Heart right ventricle (tissue), 16 donors: ENCODE measurements at regions of chr4 and their contacts with region 1.

Region 1: GRCh38 chr4:119628308-119629141 is at the start of gene PDE5A:
- DNase-seq: peak; percentile 72 to 84
- ATAC-seq: peak; percentile 80 to 95 (median 88)
- H3K4me3 ChIP-seq: peak within 1 kb of the TSS; percentile 80 to 91 (median 82)
- H3K27ac ChIP-seq: peak within 1 kb of the TSS; percentile 78 to 92 (median 88)
- H3K4me1 ChIP-seq: peaks cover 0 to 25% (median 7%) of the 10 kb centered on the region in 9 donors
- H3K27me3 ChIP-seq: peaks cover 0 to 62% (median 3%) of the 10 kb centered on the region in 7 donors
- CTCF ChIP-seq: peak; percentile 59 to 93 (median 83)
- total RNA-seq, gene PDE5A: 5.8 to 17.4 (median 11.9) TPM

Region 2: DNA sequence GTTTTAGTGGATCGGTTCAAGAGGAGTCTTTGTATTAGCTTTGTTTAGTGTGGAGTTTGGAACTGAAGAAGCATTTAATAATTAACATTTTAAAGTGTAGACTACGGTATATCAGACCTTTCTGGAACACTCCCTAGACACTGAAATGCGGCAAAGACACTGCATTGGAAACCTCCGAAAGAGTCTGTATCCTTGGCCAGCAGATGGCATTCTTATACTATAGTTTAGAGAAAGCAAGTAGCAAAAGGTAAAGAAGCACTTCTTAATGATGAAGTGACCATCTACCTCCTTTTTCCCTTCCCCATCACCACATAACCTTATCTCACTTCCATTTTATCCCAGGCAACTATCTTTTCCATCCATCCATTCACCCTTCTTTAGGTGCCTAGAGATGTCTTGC is 314.2 kb before region 1 on chr4:
- intact Hi-C with region 1: loop called in 3 of 10 experiments (anchors 5 to 10 kb)
- DNase-seq: peak in 1 of 2 donors; percentile 29
- ATAC-seq: peak in 7 of 8 donors; percentile 62 to 80 (median 76)
- H3K4me3 ChIP-seq: no peak overlapping the region
- H3K27ac ChIP-seq: no peak overlapping the region
- H3K4me1 ChIP-seq: peaks cover 0 to 5% (median 0%) of the 10 kb centered on the region in 9 donors
- H3K27me3 ChIP-seq: no peaks in the 10 kb centered on the region
- CTCF ChIP-seq: peak in 8 of 9 donors; percentile 34 to 78 (median 63)

Region 3: GRCh38 chr4:119517361-119518226 is 110.9 kb before region 1 on chr4:
- intact Hi-C with region 1: no loop called
- DNase-seq: peak in 1 of 2 donors; percentile 26
- ATAC-seq: peak; percentile 57 to 87 (median 82)
- H3K4me3 ChIP-seq: no peak overlapping the region
- H3K27ac ChIP-seq: peak overlapping the region in 9 of 10 donors; percentile 7 to 73 (median 51)
- H3K4me1 ChIP-seq: peaks cover 0 to 37% (median 12%) of the 10 kb centered on the region in 9 donors
- H3K27me3 ChIP-seq: no peaks in the 10 kb centered on the region
- CTCF ChIP-seq: no peak

Region 4: DNA sequence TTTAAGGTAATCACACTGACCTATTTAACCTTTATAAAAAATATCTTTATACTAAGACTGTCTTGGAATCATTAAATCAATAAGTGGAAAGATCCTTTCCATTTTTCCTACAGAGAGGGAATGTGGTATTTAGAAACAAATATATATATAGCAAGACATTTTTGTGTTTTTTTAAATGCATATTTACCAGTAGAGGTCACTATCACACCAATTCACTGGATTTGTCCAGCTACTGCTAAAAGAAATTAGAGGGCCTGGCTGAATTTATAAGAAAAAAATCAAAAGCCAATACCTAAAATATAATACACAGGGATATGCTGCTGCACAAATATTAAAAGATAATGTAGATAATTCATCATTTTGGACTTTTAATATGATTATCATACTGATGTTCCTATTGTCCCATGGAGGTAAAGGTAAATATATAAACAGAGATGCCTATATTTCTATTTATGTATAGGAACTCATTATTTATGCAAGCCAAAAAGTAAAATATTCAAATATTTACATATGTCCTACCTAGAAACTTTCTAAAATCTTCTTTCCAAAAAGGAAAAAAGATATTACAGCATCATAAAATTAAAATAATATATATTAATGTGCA is 69.4 kb before region 1 on chr4:
- intact Hi-C with region 1: loop called in 8 of 10 experiments (anchors 2 to 10 kb)
- DNase-seq: no peak
- ATAC-seq: no peak
- H3K4me3 ChIP-seq: no peak overlapping the region
- H3K27ac ChIP-seq: no peak overlapping the region
- H3K4me1 ChIP-seq: no peaks in the 10 kb centered on the region
- H3K27me3 ChIP-seq: no peaks in the 10 kb centered on the region
- CTCF ChIP-seq: peak; percentile 18 to 69 (median 53)

Region 5: GRCh38 chr4:119692001-119692400 is 63.5 kb after region 1 on chr4:
- intact Hi-C with region 1: loop called in 1 of 10 experiments (anchors 5 kb)
- DNase-seq: no peak
- ATAC-seq: peak in 7 of 8 donors; percentile 56 to 83 (median 74)
- H3K4me3 ChIP-seq: peak overlapping the region in 5 of 10 donors; percentile 18 to 50 (median 33)
- H3K27ac ChIP-seq: peak overlapping the region in 5 of 10 donors; percentile 28 to 68 (median 53)
- H3K4me1 ChIP-seq: peaks cover 0 to 3% (median 0%) of the 10 kb centered on the region in 9 donors
- H3K27me3 ChIP-seq: no peaks in the 10 kb centered on the region
- CTCF ChIP-seq: peak in 7 of 9 donors; percentile 27 to 65 (median 54)

Region 6: DNA sequence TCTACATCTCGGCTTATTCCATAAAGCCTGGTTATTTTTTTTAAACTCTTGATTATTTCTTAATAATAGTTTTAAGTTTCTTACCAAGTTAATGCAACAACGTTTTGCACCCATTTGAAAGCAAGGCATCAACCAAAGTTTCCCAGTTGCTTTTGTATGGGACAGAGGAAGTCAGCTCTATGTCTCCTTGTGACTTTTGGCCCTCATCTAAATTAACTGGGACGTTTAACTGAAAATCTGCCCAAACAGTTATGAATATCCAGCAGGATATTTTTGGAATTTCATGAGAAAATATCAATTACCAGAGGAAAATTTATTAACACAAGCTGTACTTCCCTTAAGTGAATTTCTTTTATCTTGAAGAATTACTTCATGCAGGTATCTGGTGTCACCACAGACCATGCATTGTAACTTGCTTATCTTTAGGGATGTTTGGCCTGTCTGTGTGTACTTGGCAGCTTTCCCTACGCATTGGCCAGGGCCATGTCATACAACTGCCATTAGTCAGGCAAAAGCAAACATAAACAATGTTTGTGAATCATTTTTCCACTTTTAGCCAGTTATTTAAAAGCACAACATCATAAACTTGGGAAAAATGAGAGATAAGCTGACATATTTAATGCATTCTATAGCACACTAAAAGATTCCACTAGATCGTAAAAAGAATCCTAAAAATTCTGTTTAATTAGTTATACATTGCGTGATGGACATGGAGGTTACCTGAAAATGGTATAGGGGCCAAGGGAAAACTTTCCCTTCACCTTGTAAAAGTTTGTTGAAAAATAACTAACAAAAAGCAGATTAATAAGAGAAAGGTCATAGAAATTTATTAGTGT is 101.5 kb after region 1 on chr4:
- intact Hi-C with region 1: loop called in 1 of 10 experiments (anchors 5 kb)
- DNase-seq: peak in 1 of 2 donors; percentile 55
- ATAC-seq: peak in 6 of 8 donors; percentile 58 to 90 (median 75)
- H3K4me3 ChIP-seq: no peak overlapping the region
- H3K27ac ChIP-seq: peak overlapping the region in 7 of 10 donors; percentile 28 to 68 (median 52)
- H3K4me1 ChIP-seq: peaks cover 7 to 59% (median 31%) of the 10 kb centered on the region in 9 donors
- H3K27me3 ChIP-seq: no peaks in the 10 kb centered on the region
- CTCF ChIP-seq: no peak

Region 7: GRCh38 chr4:119785963-119786362 is 157.4 kb after region 1 on chr4:
- intact Hi-C with region 1: loop called in 3 of 10 experiments (anchors 1 to 10 kb)
- DNase-seq: no peak
- ATAC-seq: no peak
- H3K4me3 ChIP-seq: no peak overlapping the region
- H3K27ac ChIP-seq: no peak overlapping the region
- H3K4me1 ChIP-seq: peaks cover 0 to 4% (median 0%) of the 10 kb centered on the region in 9 donors
- H3K27me3 ChIP-seq: no peaks in the 10 kb centered on the region
- CTCF ChIP-seq: peak in 7 of 9 donors; percentile 16 to 60 (median 45)